Spleen (tissue), 13 donors: ENCODE measurements at regions of chr13 and their contacts with region 1.

Region 1: DNA sequence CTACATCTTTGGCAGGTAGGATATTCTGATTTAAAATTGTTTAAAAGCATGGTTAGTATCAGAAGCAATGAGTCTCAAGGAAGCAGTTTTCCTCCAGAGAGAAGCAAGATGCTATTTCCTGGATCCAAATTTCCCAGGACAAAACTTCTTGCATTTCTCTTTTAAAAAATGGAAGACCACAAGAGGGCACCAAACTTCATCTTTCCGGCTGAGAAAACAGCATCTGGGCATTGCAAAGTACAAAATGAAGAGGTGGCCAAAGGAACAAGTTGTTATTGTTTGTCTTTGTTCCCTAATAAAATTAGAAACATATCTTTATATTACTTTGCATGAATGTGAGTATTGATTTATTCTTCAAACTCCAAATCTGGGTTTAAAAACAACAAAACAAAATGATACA is 60.0 kb upstream of the LRCH1 start:
- DNase-seq: no peak
- H3K4me3 ChIP-seq: no peak overlapping the region
- H3K27ac ChIP-seq: no peak overlapping the region
- H3K4me1 ChIP-seq: peaks cover 0 to 16% (median 4%) of the 10 kb centered on the region in 6 donors
- H3K27me3 ChIP-seq: no peaks in the 10 kb centered on the region
- CTCF ChIP-seq: peak in 9 of 11 experiments; percentile 35 to 67 (median 60)
- POLR2A ChIP-seq: no peak

Region 2: GRCh38 chr13:46544208-46544607 is 51.3 kb after region 1 on chr13:
- intact Hi-C with region 1: loop called (anchors 10 kb)
- DNase-seq: no peak
- H3K4me3 ChIP-seq: no peak overlapping the region
- H3K27ac ChIP-seq: no peak overlapping the region
- H3K4me1 ChIP-seq: no peaks in the 10 kb centered on the region
- H3K27me3 ChIP-seq: no peaks in the 10 kb centered on the region
- CTCF ChIP-seq: no peak
- POLR2A ChIP-seq: no peak

Region 3: DNA sequence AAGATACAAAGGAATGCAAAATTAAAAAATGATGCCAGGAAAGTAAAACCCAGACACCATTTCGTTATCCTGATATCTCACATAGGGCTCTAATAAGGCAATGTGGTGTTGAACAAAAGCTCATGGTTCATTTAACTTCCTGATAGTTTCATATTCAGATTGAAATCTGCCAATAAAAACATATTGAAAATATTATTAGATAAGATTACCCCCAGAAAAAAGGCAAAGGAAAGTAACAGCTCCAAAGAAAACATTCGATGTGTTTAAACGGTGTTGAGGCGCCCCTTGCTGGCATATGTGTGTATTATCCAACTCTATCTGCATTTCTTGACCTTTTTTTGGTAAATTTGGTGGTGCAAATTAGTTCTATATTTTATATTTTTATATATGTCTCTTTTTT is 228.1 kb after region 1 on chr13:
- intact Hi-C with region 1: loop called (anchors 5 kb)
- DNase-seq: no peak
- H3K4me3 ChIP-seq: no peak overlapping the region
- H3K27ac ChIP-seq: no peak overlapping the region
- H3K4me1 ChIP-seq: peaks cover 0 to 20% (median 7%) of the 10 kb centered on the region in 6 donors
- H3K27me3 ChIP-seq: no peaks in the 10 kb centered on the region
- CTCF ChIP-seq: peak; percentile 46 to 78 (median 63)
- POLR2A ChIP-seq: no peak